Right cardiac atrium (tissue), 5 donors: ENCODE measurements at regions of chr18 and their contacts with region 1.

Region 1: DNA sequence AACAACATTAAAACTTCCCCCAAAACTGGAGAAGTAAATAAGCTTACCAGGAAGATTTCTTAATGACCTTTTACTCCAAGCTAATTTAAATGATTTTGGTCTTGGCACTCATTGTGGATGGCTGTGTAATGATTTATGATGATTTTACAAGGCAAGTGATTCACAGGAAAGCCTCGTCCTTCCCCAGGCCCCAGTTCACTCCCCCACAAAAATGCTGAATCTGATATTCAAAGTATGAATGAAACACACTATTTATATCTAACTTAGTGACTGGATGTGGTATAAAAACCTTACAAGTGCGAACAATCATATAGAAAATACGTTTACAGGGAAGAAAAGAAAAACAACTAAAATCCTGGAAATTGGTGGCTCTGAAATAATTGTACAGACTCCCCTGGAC is 49.8 kb downstream of the ZNF516 start:
- DNase-seq: no peak
- ATAC-seq: no peak
- H3K4me3 ChIP-seq: no peak overlapping the region
- H3K27ac ChIP-seq: no peak overlapping the region
- H3K4me1 ChIP-seq: peaks cover 9% of the 10 kb centered on the region
- H3K27me3 ChIP-seq: no peaks in the 10 kb centered on the region

Region 2: GRCh38 chr18:76499637-76500340 is 54.5 kb after region 1 on chr18:
- intact Hi-C with region 1: loop called in 2 of 4 experiments (anchors 5 to 10 kb)
- DNase-seq: no peak
- ATAC-seq: no peak
- H3K4me3 ChIP-seq: no peak overlapping the region
- H3K27ac ChIP-seq: no peak overlapping the region
- H3K4me1 ChIP-seq: no peaks in the 10 kb centered on the region
- H3K27me3 ChIP-seq: no peaks in the 10 kb centered on the region